ENCODE measurements at regions of chr4 and their contacts with region 1.

Region 1: DNA sequence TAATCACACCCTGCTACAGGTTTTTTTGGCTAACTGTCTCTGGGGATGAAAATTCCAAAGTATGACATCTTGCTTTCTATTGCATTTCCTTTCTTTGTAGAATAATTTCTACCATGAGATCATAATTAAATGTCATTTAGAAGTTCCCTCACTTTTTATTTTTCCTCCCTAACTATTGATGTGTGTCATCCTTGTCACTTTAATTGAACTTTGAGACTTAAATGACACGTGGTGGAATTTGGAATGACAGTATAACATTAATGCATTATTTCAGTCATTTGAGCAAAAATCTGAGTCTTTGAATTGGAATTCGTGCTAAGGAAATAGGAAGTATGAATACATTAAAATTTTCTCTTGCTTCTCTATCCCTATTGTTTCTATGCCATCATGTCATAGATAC is 745.4 kb downstream of the PDHA2 start:
- DNase-seq: no peak
- H3K4me3 Mint-ChIP-seq: no peak overlapping the region
- H3K27ac Mint-ChIP-seq: no peak overlapping the region
- H3K4me1 Mint-ChIP-seq: no peaks in the 10 kb centered on the region
- H3K27me3 Mint-ChIP-seq: no peaks in the 10 kb centered on the region

Region 2: DNA sequence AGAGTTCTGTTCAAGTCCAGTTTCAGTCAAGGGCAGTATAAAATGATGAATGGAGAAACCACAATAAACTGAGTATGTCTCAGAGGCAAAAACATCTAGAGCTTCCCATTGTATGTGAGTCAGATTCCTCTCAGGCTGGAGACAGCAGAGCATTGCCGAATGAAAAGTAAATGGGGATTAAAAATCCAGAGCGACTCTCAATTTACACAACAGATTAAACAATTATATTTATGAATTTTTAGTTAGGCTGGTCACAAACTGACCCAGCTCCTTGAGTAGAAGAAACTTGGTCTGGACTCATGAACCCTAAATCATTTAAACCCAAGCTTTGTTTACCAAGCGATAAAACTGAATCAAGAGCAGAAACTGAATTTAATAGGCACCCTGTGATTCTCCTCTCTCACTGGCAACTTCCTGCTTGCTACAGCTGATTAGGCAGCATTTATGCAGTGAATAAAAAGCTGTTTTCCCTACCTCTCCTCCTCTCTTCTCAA is 177.5 kb before region 1 on chr4:
- CTCF ChIA-PET with region 1: no interaction called
- POLR2A ChIA-PET with region 1: no interaction called
- intact Hi-C with region 1: no loop called
- DNase-seq: no peak
- H3K4me3 Mint-ChIP-seq: no peak overlapping the region
- H3K27ac Mint-ChIP-seq: no peak overlapping the region
- H3K4me1 Mint-ChIP-seq: no peaks in the 10 kb centered on the region
- H3K27me3 Mint-ChIP-seq: no peaks in the 10 kb centered on the region

Region 3: GRCh38 chr4:96649536-96649935 is 64.2 kb after region 1 on chr4:
- CTCF ChIA-PET with region 1: no interaction called
- POLR2A ChIA-PET with region 1: no interaction called
- intact Hi-C with region 1: loop called (anchors 10 kb)
- DNase-seq: no peak
- H3K4me3 Mint-ChIP-seq: no peak overlapping the region
- H3K27ac Mint-ChIP-seq: no peak overlapping the region
- H3K4me1 Mint-ChIP-seq: no peaks in the 10 kb centered on the region
- H3K27me3 Mint-ChIP-seq: no peaks in the 10 kb centered on the region

Measured in activated CD4-positive, alpha-beta memory T cell treated with anti-CD3 and anti-CD28 coated beads for 36 hours (primary cell).